Aorta (tissue), 5 donors: ENCODE measurements at regions of chr13 and their contacts with region 1.

Region 1: DNA sequence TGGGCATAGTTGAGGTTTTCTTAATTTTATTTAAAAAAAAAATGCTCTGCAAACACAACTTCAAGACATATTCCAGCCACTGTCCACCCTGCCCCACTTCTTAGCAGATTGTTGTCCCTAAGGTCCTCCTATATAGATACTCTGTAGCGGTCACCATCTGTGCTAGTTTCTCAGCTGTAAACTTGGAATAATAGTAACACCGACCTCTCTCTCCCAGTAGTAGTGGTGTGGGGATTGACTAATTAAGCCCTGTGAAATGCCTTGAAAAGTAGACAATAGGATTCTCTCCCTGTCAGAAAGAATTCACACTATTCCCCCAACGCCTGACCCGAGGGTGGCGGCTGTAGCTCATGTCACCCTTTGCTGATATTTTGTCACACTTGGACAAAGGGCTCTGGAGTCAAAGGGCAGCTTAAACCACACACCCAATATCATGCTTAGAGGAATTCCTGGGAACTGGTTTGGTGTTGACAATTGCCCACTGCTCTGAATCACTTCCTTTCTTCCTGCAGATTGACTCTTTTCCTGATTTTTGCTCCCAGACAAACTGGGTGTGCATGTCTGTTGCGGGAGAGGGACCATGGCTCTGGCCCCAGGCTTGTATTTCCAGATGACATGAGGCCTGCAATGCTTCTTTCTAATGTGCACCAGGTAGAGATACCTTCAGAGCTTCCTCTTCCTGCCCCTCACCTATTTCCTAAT is 9.1 kb upstream of the SERP2 start:
- DNase-seq: no peak
- ATAC-seq: no peak
- H3K4me3 ChIP-seq: no peak overlapping the region
- H3K27ac ChIP-seq: no peak overlapping the region
- H3K4me1 ChIP-seq: peaks cover 0 to 5% of the 10 kb centered on the region in 2 donors
- H3K27me3 ChIP-seq: no peaks in the 10 kb centered on the region

Region 2: DNA sequence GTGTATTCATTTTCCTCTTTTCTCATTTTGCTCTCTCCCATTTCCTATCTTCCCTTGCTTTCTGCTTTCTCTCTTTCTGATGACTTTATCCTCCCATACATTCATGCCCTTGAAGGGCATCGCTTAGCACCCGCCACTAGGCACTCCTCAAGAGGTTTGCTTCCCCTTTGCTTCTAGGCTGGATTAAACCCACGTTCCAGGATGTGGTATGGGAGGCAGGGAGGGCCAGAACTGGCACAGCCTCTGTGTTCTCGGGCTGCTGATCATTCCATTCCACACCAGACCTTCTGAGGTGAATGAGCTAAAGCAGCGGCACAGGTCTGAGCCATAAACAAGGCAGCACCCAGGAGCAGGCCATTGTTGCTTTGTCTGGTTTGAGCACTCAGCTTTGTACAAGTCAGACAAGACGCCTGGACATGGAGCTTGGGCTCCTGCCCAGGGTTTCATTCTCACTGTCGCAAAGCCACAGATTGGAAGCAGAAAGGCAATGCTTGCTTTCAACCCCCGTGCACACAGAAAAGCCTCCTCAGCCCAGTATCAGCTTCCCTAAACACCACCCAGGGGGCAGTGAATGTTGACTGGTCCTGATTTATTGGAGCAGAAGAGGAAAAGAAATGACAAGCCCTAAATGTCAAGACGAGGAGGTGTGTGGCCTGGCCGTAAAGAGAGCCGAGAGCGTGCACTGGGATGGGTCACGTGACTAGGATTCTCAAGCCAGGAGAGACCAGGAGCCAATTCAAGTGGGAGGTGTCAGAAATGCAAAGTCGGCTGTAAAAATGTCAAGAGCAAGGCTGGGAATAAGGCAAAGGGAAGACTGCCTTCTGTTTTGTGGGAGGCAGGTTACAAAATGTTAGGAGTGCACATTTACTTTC is 208.8 kb before region 1 on chr13:
- intact Hi-C with region 1: loop called in 1 of 2 experiments (anchors 5 kb)
- DNase-seq: peak in 1 of 2 donors; percentile 69
- ATAC-seq: peak; percentile 61
- H3K4me3 ChIP-seq: no peak overlapping the region
- H3K27ac ChIP-seq: peak overlapping the region; percentile 46 to 68
- H3K4me1 ChIP-seq: peaks cover 7 to 8% of the 10 kb centered on the region in 2 donors
- H3K27me3 ChIP-seq: no peaks in the 10 kb centered on the region

Region 3: GRCh38 chr13:44312898-44313551 is 51.5 kb before region 1 on chr13:
- intact Hi-C with region 1: loop called in 1 of 2 experiments (anchors 5 kb)
- DNase-seq: no peak
- ATAC-seq: no peak
- H3K4me3 ChIP-seq: no peak overlapping the region
- H3K27ac ChIP-seq: no peak overlapping the region
- H3K4me1 ChIP-seq: peaks cover 5 to 6% of the 10 kb centered on the region in 2 donors
- H3K27me3 ChIP-seq: no peaks in the 10 kb centered on the region

Region 4: GRCh38 chr13:44565881-44566280 is 201.4 kb after region 1 on chr13:
- intact Hi-C with region 1: no loop called
- DNase-seq: no peak
- ATAC-seq: no peak
- H3K4me3 ChIP-seq: no peak overlapping the region
- H3K27ac ChIP-seq: no peak overlapping the region
- H3K4me1 ChIP-seq: peaks cover 0 to 14% of the 10 kb centered on the region in 2 donors
- H3K27me3 ChIP-seq: no peaks in the 10 kb centered on the region